A673 (cell line): ENCODE measurements at regions of chr3 and their contacts with region 1.

Region 1: DNA sequence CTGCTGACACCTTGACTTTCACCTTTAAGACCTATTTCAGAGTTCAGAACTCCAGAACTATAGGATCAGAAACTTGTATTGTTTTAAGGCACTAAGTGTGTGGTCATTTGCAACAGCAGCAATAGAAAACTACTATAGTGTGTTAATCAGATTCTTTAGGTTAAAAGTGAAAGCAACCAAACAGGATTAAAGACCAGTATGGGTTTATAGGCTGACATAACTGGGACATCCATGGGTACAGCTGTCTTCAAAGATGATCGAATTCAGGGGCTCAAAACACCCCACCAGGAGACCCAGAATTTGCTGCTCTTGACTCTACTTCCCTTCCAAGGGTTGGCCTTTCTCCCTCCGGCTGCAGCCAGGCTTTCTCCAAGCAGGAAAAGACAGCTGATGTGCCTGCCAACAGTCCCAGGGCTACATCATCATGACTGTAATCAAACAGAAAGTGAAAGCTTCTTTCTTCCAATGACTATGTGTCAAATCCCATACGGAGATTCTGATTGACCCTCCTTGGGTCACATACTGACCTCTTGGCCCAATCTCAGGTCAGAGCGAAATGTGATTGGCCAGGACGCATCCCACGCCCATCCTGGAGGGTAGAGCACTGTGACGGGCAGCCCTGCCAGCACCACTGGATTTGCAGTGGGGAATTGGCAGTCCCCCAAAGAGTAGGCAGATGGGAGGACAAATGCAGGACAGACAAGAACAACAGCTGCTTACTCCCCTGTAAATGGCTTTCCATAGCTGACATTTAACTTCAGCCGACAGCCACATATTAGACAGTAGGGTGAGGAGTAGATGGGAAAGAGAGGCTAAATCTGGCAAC is 51.4 kb upstream of the RNF7 start:
- DNase-seq: peak; percentile 25
- H3K4me3 ChIP-seq: peak overlapping the region; percentile 6
- H3K27ac ChIP-seq: no peak overlapping the region
- H3K4me1 ChIP-seq: peaks cover 3% of the 10 kb centered on the region
- H3K27me3 ChIP-seq: no peaks in the 10 kb centered on the region
- CTCF ChIP-seq: no peak

Region 2: GRCh38 chr3:140386357-140387100 is 1300.2 kb before region 1 on chr3:
- CTCF ChIA-PET with region 1: no interaction called
- POLR2A ChIA-PET with region 1: no interaction called
- intact Hi-C with region 1: no loop called
- DNase-seq: no peak
- H3K4me3 ChIP-seq: no peak overlapping the region
- H3K27ac ChIP-seq: no peak overlapping the region
- H3K4me1 ChIP-seq: no peaks in the 10 kb centered on the region
- H3K27me3 ChIP-seq: no peaks in the 10 kb centered on the region
- CTCF ChIP-seq: no peak

Region 3: DNA sequence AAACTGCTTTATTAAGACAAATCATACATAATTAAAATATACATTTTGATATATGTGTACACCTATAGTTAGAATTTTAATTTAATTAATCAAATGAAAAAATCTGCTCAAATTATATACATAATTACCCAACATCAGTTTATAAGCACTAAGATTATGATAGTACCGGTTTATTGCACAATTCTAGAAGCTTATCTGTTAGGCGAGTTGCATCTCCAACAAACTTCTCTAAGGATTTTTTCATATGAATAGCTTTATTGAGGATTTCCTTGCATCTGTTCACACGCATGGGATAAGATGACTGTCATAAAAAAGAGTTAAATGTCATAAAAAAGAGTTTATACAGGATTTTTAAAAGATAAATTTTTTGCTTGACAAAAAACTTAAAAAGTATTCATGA is 781.1 kb after region 1 on chr3:
- CTCF ChIA-PET with region 1: no interaction called
- POLR2A ChIA-PET with region 1: interaction called, 10 read pairs
- intact Hi-C with region 1: no loop called
- DNase-seq: no peak
- H3K4me3 ChIP-seq: no peak overlapping the region
- H3K27ac ChIP-seq: no peak overlapping the region
- H3K4me1 ChIP-seq: no peaks in the 10 kb centered on the region
- H3K27me3 ChIP-seq: no peaks in the 10 kb centered on the region
- CTCF ChIP-seq: no peak